Activated naive CD4-positive, alpha-beta T cell treated with anti-CD3 and anti-CD28 coated beads, Interleukin-2, amount 10 ng/mL, durations not matched to agents 7 days and 5 days (primary cell): ENCODE measurements at regions of chr12 and their contacts with region 1.

Region 1: GRCh38 chr12:6684609-6685008 is 4.6 kb downstream of the ZNF384 start:
- DNase-seq: peak; percentile 67
- H3K4me3 Mint-ChIP-seq: no peak overlapping the region
- H3K27ac Mint-ChIP-seq: peak overlapping the region; percentile 54
- H3K4me1 Mint-ChIP-seq: peaks cover 53% of the 10 kb centered on the region
- H3K27me3 Mint-ChIP-seq: no peaks in the 10 kb centered on the region

Region 2: DNA sequence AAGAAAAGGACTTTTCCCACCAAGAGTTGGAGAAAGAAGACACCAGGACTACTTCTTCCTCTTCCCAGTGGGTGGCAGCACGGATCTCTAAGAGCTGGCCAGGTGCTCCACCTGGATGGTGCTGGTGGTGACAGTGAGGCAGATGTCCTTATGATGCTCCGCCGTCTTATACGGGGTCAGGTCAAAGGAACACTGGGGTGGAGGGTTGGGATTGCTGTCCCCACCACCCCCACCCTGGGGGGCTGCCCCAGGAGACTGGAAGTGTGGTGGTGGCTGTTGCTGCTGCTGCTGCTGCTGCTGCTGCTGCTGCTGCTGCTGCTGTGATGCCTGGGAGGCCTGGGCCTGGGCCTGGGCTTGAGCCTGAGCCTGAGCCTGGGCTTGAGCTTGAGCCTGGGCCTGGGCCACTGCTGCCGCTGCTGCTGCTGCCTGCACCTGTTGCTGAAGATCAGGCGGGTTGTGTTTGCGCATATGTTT is 16.9 kb before region 1 on chr12:
- CTCF ChIA-PET with region 1: interaction called, 13 read pairs
- DNase-seq: no peak
- H3K4me3 Mint-ChIP-seq: no peak overlapping the region
- H3K27ac Mint-ChIP-seq: no peak overlapping the region
- H3K4me1 Mint-ChIP-seq: peaks cover 18% of the 10 kb centered on the region
- H3K27me3 Mint-ChIP-seq: no peaks in the 10 kb centered on the region